AG04449 (cell line): ENCODE measurements at regions of chr19 and their contacts with region 1.

Region 1: GRCh38 chr19:18349524-18350128 is 9.2 kb downstream of the PGPEP1 start:
- DNase-seq: no peak
- H3K4me3 ChIP-seq: no peak overlapping the region
- CTCF ChIP-seq: peak; percentile 84

Region 2: GRCh38 chr19:18128044-18128443 is 221.6 kb before region 1 on chr19:
- CTCF ChIA-PET with region 1: no interaction called
- POLR2A ChIA-PET with region 1: no interaction called
- DNase-seq: no peak
- H3K4me3 ChIP-seq: no peak overlapping the region
- CTCF ChIP-seq: no peak

Region 3: DNA sequence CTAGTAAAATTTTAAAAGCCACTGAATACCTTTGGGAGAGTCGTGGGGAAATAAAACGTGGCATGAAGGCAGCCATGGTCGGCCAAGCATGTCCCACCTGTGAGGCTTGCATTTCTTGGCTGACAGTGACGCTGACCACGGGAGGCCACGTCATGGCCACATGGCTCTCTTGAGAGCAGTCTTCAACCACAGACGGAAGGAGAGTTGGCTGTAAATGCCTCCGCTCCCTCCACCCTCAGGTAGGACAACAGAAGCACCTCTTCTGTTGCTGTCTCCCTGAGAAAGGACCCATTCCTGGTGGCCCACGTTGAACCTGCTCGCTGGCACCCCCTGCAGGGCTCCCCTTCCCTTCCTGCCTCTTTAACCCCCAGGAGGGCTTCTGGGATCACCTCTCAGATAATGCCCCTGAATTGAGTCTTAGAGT is 58.4 kb after region 1 on chr19:
- CTCF ChIA-PET with region 1: interaction called, 298 read pairs
- POLR2A ChIA-PET with region 1: no interaction called
- DNase-seq: no peak
- H3K4me3 ChIP-seq: no peak overlapping the region
- CTCF ChIP-seq: peak; percentile 52